ENCODE measurements at regions of chr11 and their contacts with region 1.

Region 1: DNA sequence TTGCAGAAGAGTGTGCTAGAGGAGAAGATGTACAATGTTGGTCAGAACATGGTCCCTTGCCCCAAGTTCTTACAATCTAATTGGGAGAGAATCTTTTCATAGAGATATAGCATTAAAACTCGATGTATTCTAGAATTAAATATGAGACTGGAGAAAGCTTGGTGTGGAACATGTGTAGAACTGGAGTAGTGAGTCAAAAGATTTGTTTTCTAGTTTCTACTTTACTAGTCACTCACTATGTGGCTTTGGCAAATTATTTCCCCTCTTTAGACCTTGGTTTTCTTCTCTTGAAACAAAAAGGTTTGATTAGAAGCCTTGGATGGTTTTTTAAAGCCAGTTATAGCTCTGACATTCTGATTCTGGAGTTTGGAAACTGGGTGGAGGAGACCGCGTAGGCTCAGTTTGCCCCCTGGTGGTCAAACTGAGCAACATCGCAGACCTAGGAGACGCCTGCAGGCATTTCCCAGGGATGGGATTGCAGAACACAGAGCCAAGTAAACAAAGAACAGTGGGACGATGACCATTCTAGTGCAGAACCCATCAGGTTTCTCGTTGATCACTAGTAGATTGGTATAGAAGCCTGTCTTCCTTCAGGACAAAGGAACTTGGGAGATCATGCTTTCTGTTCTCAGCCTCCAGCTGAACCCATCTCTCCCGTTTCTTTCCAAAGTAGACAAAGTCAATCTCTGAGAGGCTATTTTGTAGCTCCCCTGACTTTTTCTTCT is 8.5 kb upstream of the CHRDL2 start:
- DNase-seq: peak; percentile 40
- ATAC-seq: peak; percentile 91
- H3K4me3 Mint-ChIP-seq: no peak overlapping the region
- H3K27ac Mint-ChIP-seq: no peak overlapping the region
- H3K4me1 Mint-ChIP-seq: peaks cover 8% of the 10 kb centered on the region
- H3K27me3 Mint-ChIP-seq: peaks cover 15% of the 10 kb centered on the region
- CTCF ChIP-seq: peak; percentile 78

Region 2: GRCh38 chr11:74696932-74697687 is 42.6 kb before region 1 on chr11:
- CTCF ChIA-PET with region 1: interaction called, 64 read pairs
- POLR2A ChIA-PET with region 1: interaction called, 3 read pairs
- intact Hi-C with region 1: no loop called
- DNase-seq: no peak
- ATAC-seq: no peak
- H3K4me3 Mint-ChIP-seq: no peak overlapping the region
- H3K27ac Mint-ChIP-seq: no peak overlapping the region
- H3K4me1 Mint-ChIP-seq: no peaks in the 10 kb centered on the region
- H3K27me3 Mint-ChIP-seq: peaks cover 11% of the 10 kb centered on the region
- CTCF ChIP-seq: no peak